ENCODE measurements at regions of chr3 and their contacts with region 1.

Region 1: GRCh38 chr3:141441381-141442364 is 45.2 kb upstream of the RASA2 start:
- DNase-seq: no peak
- H3K4me3 ChIP-seq: no peak overlapping the region
- H3K27me3 ChIP-seq: no peaks in the 10 kb centered on the region
- CTCF ChIP-seq: peak; percentile 82

Region 2: DNA sequence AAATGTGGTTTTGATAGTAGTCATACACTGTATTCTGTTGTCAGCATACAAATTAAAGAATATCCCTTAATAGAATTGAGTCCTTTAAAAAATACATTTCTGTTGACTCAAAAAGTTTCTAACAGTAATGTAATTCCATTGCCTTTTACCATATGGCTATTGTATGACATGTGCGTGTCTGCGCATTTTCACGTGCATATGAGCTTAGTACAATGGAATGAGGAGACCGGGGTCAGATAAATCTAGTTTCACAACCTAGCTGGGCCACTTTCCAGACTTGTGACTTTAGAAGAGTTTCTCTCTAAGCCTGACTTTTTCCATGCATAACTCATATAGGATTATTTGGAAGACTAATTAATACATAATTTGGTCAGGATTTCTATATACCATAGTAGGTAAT is 34.6 kb before region 1 on chr3:
- CTCF ChIA-PET with region 1: interaction called, 16 read pairs
- POLR2A ChIA-PET with region 1: no interaction called
- DNase-seq: peak; percentile 86
- H3K4me3 ChIP-seq: no peak overlapping the region
- H3K27me3 ChIP-seq: no peaks in the 10 kb centered on the region
- CTCF ChIP-seq: no peak

Region 3: GRCh38 chr3:141426404-141427034 is 15.2 kb before region 1 on chr3:
- CTCF ChIA-PET with region 1: interaction called, 26 read pairs
- POLR2A ChIA-PET with region 1: interaction called, 8 read pairs
- DNase-seq: no peak
- H3K4me3 ChIP-seq: no peak overlapping the region
- H3K27me3 ChIP-seq: no peaks in the 10 kb centered on the region
- CTCF ChIP-seq: no peak

Measured in BJ (cell line).